ENCODE measurements at regions of chr19 and their contacts with region 1.

Region 1: DNA sequence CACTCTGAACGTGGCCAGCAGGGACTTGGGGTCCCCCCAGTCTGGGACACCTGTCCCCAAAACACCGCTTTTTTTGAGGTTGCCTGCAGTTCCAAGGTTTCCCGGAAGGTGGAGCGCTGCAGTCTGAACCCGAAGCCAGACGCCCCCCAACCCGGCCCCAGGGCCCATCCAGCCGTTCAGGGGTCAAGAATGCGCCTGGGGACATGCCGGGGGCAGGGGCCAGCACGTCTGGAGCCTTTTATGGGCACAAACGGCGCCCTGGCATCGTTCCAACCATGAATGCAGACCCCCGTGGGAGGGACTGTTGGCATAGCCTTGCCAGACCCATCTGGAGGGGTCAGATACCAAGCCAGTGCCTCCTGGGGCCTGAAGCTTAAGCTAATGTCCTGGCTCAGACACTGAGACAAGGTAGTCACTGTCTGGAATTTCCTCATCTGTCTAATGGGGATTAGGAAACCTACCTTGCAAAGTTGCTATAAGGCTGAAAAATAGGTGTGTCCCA is 6.9 kb downstream of the S1PR5 start:
- DNase-seq: peak; percentile 88
- ATAC-seq: peak; percentile 23
- H3K4me3 Mint-ChIP-seq: no peak overlapping the region
- H3K27ac Mint-ChIP-seq: no peak overlapping the region
- H3K4me1 Mint-ChIP-seq: peaks cover 11% of the 10 kb centered on the region
- H3K27me3 Mint-ChIP-seq: peaks cover 34% of the 10 kb centered on the region
- CTCF ChIP-seq: peak; percentile 80

Region 2: GRCh38 chr19:10543420-10544241 is 33.3 kb after region 1 on chr19 and contains the start of gene ATG4D:
- CTCF ChIA-PET with region 1: interaction called, 18 read pairs
- POLR2A ChIA-PET with region 1: no interaction called
- DNase-seq: peak; percentile 92
- ATAC-seq: peak; percentile 87
- H3K4me3 Mint-ChIP-seq: peak within 1 kb of the TSS; percentile 83
- H3K27ac Mint-ChIP-seq: peak within 1 kb of the TSS; percentile 93
- H3K4me1 Mint-ChIP-seq: peaks cover 4% of the 10 kb centered on the region; the same call in 1 of the 2 replicates
- H3K27me3 Mint-ChIP-seq: peaks cover 6% of the 10 kb centered on the region
- CTCF ChIP-seq: no peak
- total RNA-seq, gene ATG4D: 50.3 to 59.4 TPM (median 53.8 TPM) in 3 replicates

Region 3: DNA sequence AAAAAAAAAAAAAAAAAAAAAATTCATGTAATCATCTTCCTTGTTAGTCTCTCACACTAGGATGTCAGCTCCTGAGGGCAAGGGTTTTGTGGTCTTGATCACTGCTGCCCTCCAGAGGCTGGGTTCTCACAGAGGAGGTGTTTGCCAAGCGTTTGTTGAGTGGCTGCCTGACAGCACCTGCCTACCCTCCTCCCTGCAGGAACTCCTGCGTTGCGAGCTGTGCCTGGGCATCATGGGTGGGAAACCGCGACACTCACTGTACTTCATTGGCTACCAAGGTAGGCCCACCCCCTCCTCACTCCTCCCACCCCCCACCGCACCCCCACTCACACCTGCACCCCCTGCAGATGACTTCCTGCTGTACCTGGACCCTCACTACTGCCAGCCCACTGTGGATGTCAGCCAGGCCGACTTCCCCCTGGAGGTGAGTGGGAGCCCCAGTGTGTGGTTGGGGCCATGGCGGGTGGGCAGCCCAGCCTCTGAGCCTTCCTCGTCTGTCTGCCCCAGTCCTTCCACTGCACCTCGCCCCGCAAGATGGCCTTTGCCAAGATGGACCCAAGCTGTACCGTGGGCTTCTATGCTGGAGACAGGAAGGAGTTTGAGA is 41.4 kb after region 1 on chr19:
- CTCF ChIA-PET with region 1: interaction called, 23 read pairs
- POLR2A ChIA-PET with region 1: interaction called, 6 read pairs
- DNase-seq: peak; percentile 41
- ATAC-seq: peak; percentile 38
- H3K4me3 Mint-ChIP-seq: no peak overlapping the region
- H3K27ac Mint-ChIP-seq: no peak overlapping the region
- H3K4me1 Mint-ChIP-seq: no peaks in the 10 kb centered on the region
- H3K27me3 Mint-ChIP-seq: no peaks in the 10 kb centered on the region
- CTCF ChIP-seq: no peak

Region 4: DNA sequence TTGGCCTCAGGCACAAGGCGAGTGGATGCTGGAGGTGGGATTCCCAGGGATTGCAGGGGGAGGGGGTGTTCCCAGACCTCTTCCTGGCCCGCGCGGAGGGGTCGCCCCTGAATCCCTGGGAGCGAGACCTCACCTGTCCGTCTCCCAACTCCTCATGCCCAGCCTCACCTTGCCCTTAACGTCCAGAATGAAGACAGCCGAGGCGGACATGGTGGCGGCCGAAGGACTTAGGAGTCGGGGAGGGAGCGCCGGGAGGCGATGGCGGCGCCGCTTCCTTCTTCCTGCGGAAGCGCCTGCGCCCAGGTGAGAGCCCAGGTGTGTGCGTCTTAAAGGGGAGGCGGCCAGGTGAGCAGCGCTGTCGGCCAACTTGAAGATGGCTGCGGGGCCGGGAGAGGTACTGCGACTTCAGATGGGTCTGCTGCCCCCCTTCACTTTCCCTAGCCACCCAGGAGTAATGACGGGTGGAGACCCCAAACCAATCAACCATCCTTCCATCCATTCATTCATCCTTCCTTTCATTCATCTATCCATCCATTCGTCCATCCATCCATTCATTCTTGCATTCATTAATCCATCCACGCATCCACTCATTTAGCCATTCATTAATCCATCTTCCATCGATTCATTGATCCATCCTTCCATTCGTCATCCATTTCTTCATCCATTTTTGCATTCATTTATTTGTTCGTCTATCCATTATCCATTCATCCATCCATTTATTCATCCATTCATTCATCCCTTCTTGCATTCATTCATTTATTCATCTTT is 76.9 kb after region 1 on chr19 and contains the start of gene AP1M2:
- CTCF ChIA-PET with region 1: no interaction called
- POLR2A ChIA-PET with region 1: no interaction called
- DNase-seq: peak; percentile 81
- ATAC-seq: peak; percentile 91
- H3K4me3 Mint-ChIP-seq: peak within 1 kb of the TSS; percentile 90
- H3K27ac Mint-ChIP-seq: peak within 1 kb of the TSS; percentile 69
- H3K4me1 Mint-ChIP-seq: peaks cover 13% of the 10 kb centered on the region
- H3K27me3 Mint-ChIP-seq: peaks cover 7% of the 10 kb centered on the region
- CTCF ChIP-seq: no peak
- total RNA-seq, gene AP1M2: 127 to 176 TPM (median 174 TPM) in 3 replicates